ENCODE measurements at regions of chr19 and their contacts with region 1.

Region 1: GRCh38 chr19:36214386-36215275 is at the starts of genes ZNF146 and ZNF565:
- DNase-seq: peak; percentile 99
- ATAC-seq: peak; percentile 88
- H3K4me3 Mint-ChIP-seq: no peak within 1 kb of the TSS
- H3K27ac Mint-ChIP-seq: no peak within 1 kb of the TSS
- H3K4me1 Mint-ChIP-seq: peaks cover 25% of the 10 kb centered on the region
- H3K27me3 Mint-ChIP-seq: no peaks in the 10 kb centered on the region
- total RNA-seq, gene ZNF146: 105 to 111 TPM
- total RNA-seq, gene ZNF565: 2.8 to 2.9 TPM

Region 2: GRCh38 chr19:35931161-35931873 is 283.3 kb before region 1 on chr19:
- CTCF ChIA-PET with region 1: no interaction called
- POLR2A ChIA-PET with region 1: no interaction called
- intact Hi-C with region 1: loop called in 1 of 2 experiments (anchors 1 kb)
- DNase-seq: peak; percentile 100
- ATAC-seq: peak; percentile 96
- H3K4me3 Mint-ChIP-seq: peak overlapping the region; percentile 67
- H3K27ac Mint-ChIP-seq: peak overlapping the region; percentile 86
- H3K4me1 Mint-ChIP-seq: peaks cover 26% of the 10 kb centered on the region
- H3K27me3 Mint-ChIP-seq: no peaks in the 10 kb centered on the region

Region 3: GRCh38 chr19:36132489-36132891 is 82.1 kb before region 1 on chr19:
- CTCF ChIA-PET with region 1: interaction called, 9 read pairs
- POLR2A ChIA-PET with region 1: interaction called, 8 read pairs
- intact Hi-C with region 1: loop called in 1 of 2 experiments (anchors 1 kb)
- DNase-seq: peak; percentile 74
- ATAC-seq: peak; percentile 77
- H3K4me3 Mint-ChIP-seq: no peak overlapping the region
- H3K27ac Mint-ChIP-seq: peak overlapping the region; percentile 80
- H3K4me1 Mint-ChIP-seq: peaks cover 33% of the 10 kb centered on the region
- H3K27me3 Mint-ChIP-seq: no peaks in the 10 kb centered on the region

Region 4: DNA sequence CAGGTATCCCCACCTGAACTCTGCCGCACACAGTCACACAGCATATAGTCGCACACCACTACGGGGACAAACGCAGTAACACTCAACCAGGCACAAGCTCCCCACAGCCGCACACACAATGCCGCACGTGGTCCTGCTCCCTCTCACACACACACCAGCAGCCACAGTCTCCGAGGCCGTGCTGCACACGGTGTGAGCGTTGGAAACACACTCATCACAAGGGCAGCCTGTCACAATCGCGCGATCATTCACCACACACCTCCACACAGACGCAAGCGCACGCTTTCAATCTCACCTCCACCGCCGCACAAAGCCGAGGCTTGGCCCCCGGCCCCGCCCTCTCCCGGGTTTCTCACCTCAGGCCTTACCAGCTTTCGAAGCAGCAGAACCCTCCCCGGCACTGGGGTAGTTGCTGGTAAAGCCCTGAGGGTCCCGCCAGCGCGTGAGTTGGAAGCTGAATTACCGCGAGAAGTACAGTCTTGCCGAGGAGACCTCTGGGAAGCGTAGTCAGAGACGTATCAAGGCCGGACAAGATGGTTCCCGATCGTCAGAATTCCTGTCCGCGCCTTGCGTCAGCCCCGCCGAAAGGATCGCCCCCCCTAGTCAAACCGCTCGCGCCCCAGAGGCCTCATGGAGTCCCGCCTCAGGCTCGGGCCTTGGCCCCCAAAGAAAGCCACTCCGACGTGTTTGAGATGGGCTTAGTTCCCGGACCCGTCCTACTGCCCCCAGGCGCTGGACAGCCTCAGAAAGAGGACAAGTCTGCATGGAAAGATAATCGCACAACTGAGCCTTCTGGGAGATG is 274.7 kb after region 1 on chr19 and contains the start of gene ZNF566:
- CTCF ChIA-PET with region 1: interaction called, 3 read pairs
- POLR2A ChIA-PET with region 1: interaction called, 13 read pairs
- intact Hi-C with region 1: loop called (anchors 1 kb)
- DNase-seq: peak; percentile 97
- ATAC-seq: peak; percentile 93
- H3K4me3 Mint-ChIP-seq: peak within 1 kb of the TSS; percentile 86
- H3K27ac Mint-ChIP-seq: peak within 1 kb of the TSS; percentile 98
- H3K4me1 Mint-ChIP-seq: peaks cover 24% of the 10 kb centered on the region
- H3K27me3 Mint-ChIP-seq: no peaks in the 10 kb centered on the region
- total RNA-seq, gene ZNF566: 4.7 to 5.9 TPM

Region 5: DNA sequence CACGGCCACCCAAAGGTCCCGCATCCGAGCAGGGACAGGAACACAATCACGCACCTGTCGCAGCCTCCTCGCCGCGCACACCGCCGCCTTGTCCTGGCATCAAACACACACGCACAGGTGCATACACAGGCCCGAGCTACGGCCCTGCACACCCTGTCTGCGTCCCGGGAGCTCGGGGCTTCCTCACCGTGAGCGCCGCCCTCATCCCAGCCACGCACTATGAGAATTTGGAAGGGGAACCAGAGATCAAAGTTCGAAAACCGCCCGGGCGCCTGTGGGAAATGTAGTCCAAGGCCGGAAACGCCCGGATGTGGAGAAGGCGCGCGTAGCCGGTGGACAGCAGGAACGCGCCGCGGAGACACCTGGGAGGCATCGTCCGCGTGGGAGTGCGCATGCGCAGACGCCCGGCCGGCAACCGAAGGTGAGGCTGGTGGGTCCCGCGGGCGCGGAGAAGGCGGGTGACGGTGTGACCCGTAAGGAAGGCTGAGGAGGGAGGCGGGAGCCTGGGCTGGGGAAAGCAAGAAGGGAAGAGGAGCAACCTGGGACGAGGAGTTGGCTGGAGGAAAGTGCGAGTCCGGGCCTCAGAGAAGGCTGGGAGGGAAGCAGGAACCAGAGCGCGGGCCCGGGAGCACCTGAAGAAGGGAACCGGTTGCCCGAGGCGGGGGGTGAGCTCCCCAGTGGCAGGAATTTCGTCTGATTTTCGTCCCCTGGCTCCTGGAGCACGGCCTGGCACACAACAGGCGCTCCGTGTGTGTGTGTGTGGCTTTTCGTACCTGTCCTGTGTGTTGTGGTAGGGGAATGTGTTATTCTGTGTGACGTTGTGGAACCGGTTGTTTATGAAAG is 472.8 kb after region 1 on chr19 and contains the start of gene ZNF567:
- CTCF ChIA-PET with region 1: no interaction called
- POLR2A ChIA-PET with region 1: no interaction called
- intact Hi-C with region 1: loop called in 1 of 2 experiments (anchors 1 kb)
- DNase-seq: peak; percentile 99
- ATAC-seq: peak; percentile 93
- H3K4me3 Mint-ChIP-seq: peak within 1 kb of the TSS; percentile 99
- H3K27ac Mint-ChIP-seq: peak within 1 kb of the TSS; percentile 96
- H3K4me1 Mint-ChIP-seq: peaks cover 27% of the 10 kb centered on the region
- H3K27me3 Mint-ChIP-seq: no peaks in the 10 kb centered on the region
- total RNA-seq, gene ZNF567: 7.4 to 8.6 TPM

Region 6: DNA sequence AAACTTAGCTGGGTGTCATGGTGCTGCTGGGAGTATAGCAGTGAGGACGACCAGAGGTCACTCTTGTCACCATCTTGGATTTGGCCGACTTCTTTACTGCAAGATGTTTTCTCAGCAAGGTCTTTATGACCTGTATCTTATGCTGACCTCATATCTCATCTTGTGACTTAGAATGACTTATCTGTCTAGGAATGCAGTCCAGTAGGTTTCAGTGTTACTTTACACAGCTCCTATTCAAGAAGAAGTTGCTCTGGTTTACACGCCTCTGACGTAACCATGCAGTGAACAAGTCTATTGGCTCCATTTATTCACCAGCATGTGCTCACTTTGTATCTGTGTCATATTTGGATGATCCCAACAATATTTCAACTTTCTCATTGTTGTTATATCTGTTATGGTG is 531.2 kb after region 1 on chr19:
- CTCF ChIA-PET with region 1: no interaction called
- POLR2A ChIA-PET with region 1: no interaction called
- intact Hi-C with region 1: no loop called
- DNase-seq: no peak
- ATAC-seq: no peak
- H3K4me3 Mint-ChIP-seq: no peak overlapping the region
- H3K27ac Mint-ChIP-seq: no peak overlapping the region
- H3K4me1 Mint-ChIP-seq: no peaks in the 10 kb centered on the region
- H3K27me3 Mint-ChIP-seq: no peaks in the 10 kb centered on the region

Region 7: DNA sequence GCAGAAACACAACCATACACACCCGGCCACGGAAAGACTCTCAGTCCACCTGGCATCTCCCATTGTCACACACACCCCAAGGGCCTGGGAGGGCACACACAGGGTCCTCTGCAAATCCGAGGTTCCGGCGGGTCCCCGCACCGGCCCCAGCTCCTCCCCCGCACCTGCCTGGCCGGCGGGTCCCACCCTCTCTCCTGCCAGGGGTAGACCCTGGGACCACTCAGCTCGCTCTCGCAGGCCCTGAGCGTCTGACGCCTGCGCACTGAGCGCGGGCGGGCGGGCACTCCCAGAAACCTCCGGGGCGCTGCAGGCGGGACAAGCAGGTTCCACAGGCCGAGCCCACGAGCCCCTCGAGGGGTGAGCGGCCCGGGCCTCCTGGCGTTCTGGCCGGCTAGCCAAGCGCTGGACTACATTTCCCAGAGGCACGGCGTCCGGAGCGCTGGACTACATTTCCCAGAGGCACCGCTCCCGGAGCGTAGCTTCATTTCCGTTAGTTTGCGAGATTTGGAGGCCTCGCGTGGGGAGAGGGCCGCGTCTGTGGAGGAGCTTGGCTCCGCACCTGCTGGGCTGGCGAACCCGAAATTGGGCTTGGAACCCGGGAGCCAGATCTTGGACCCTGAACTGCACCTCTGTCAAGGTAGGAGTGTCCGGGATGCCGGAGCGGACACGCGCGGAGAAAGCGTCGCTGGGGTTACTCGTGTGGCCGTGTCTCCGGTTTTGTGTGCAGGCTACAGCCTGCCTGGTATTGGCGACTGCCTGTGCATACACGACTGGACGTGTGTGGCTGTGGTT is 863.5 kb after region 1 on chr19 and contains the start of gene ZNF420:
- CTCF ChIA-PET with region 1: no interaction called
- POLR2A ChIA-PET with region 1: no interaction called
- intact Hi-C with region 1: loop called in 1 of 2 experiments (anchors 1 kb)
- DNase-seq: peak; percentile 93
- ATAC-seq: peak; percentile 95
- H3K4me3 Mint-ChIP-seq: peak within 1 kb of the TSS; percentile 97
- H3K27ac Mint-ChIP-seq: peak within 1 kb of the TSS; percentile 98
- H3K4me1 Mint-ChIP-seq: peaks cover 23% of the 10 kb centered on the region
- H3K27me3 Mint-ChIP-seq: no peaks in the 10 kb centered on the region
- total RNA-seq, gene ZNF420: 9.1 to 12.8 TPM